H1 (cell line): ENCODE measurements at regions of chr5 and their contacts with region 1.

Region 1: GRCh38 chr5:150801117-150801927 is 22.8 kb downstream of the SMIM3 start:
- DNase-seq: peak in 1 of 2 experiments; percentile 75
- H3K4me3 ChIP-seq: peak overlapping the region; percentile 52 to 60 (median 56)
- H3K27ac ChIP-seq: 0 out of 2 replicates have a peak overlapping the region, but pooled peaks have one; percentile 5
- H3K4me1 ChIP-seq: peaks cover 0 to 3% (median 0%) of the 10 kb centered on the region in 4 experiments; a peak in 1 of 7 replicates
- H3K27me3 ChIP-seq: no peaks in the 10 kb centered on the region
- CTCF ChIP-seq: peak in 2 of 3 experiments; percentile 57 to 72; a peak in 3 of 4 replicates
- EP300 ChIP-seq: no peak
- POLR2A ChIP-seq: no peak
- RAD21 ChIP-seq: peak; percentile 62 to 70

Region 2: GRCh38 chr5:150778517-150779396 is 22.6 kb before region 1 on chr5 and contains the start of gene SMIM3:
- CTCF ChIA-PET with region 1: interaction called, 40 read pairs
- POLR2A ChIA-PET with region 1: interaction called, 4 read pairs
- DNase-seq: peak in 1 of 2 experiments; percentile 86
- H3K4me3 ChIP-seq: peak within 1 kb of the TSS; percentile 51 to 80 (median 74)
- H3K27ac ChIP-seq: 0 out of 2 replicates have a peak within 1 kb of the TSS, but pooled peaks have one; percentile 8
- H3K4me1 ChIP-seq: peaks cover 6 to 14% (median 10%) of the 10 kb centered on the region in 4 experiments; a peak in 5 of 7 replicates
- H3K27me3 ChIP-seq: peaks cover 0 to 8% (median 0%) of the 10 kb centered on the region in 4 experiments; a peak in 3 of 7 replicates
- CTCF ChIP-seq: peak; percentile 53 to 67 (median 60)
- EP300 ChIP-seq: no peak
- POLR2A ChIP-seq: peak; percentile 34 to 82
- RAD21 ChIP-seq: peak; percentile 64 to 74
- total RNA-seq, gene SMIM3: 10.4 and 13.2 TPM in 2 replicates

Region 3: GRCh38 chr5:150816946-150817345 is 15.6 kb after region 1 on chr5:
- CTCF ChIA-PET with region 1: interaction called, 27 read pairs
- POLR2A ChIA-PET with region 1: interaction called, 3 read pairs
- DNase-seq: no peak
- H3K4me3 ChIP-seq: no peak overlapping the region
- H3K27ac ChIP-seq: no peak overlapping the region
- H3K4me1 ChIP-seq: 0 out of 7 replicates have a peak, but pooled peaks cover 0 to 3% (median 0%) of the 10 kb centered on the region in 4 experiments
- H3K27me3 ChIP-seq: no peaks in the 10 kb centered on the region
- CTCF ChIP-seq: peak in 1 of 3 experiments; percentile 14; a peak in 1 of 4 replicates
- EP300 ChIP-seq: no peak
- POLR2A ChIP-seq: no peak
- RAD21 ChIP-seq: no peak

Region 4: GRCh38 chr5:150836703-150837102 is 35.4 kb after region 1 on chr5:
- CTCF ChIA-PET with region 1: interaction called, 24 read pairs
- POLR2A ChIA-PET with region 1: no interaction called
- DNase-seq: peak in 1 of 2 experiments; percentile 49
- H3K4me3 ChIP-seq: peak overlapping the region in 1 of 4 experiments; percentile 18; a peak in 1 of 8 replicates
- H3K27ac ChIP-seq: 0 out of 2 replicates have a peak overlapping the region, but pooled peaks have one; percentile 0
- H3K4me1 ChIP-seq: peaks cover 0 to 10% (median 3%) of the 10 kb centered on the region in 4 experiments; a peak in 2 of 7 replicates
- H3K27me3 ChIP-seq: no peaks in the 10 kb centered on the region
- CTCF ChIP-seq: peak in 2 of 3 experiments; percentile 2 to 28; a peak in 3 of 4 replicates
- EP300 ChIP-seq: peak in 1 of 2 experiments; percentile 98; a peak in 2 of 3 replicates
- POLR2A ChIP-seq: no peak
- RAD21 ChIP-seq: peak in 1 of 2 experiments; percentile 17; a peak in 2 of 4 replicates

Region 5: GRCh38 chr5:150989695-150990094 is 188.4 kb after region 1 on chr5:
- CTCF ChIA-PET with region 1: interaction called, 13 read pairs
- POLR2A ChIA-PET with region 1: no interaction called
- DNase-seq: peak; percentile 9 to 60
- H3K4me3 ChIP-seq: no peak overlapping the region
- H3K27ac ChIP-seq: no peak overlapping the region
- H3K4me1 ChIP-seq: no peaks in the 10 kb centered on the region
- H3K27me3 ChIP-seq: no peaks in the 10 kb centered on the region
- CTCF ChIP-seq: peak; percentile 40 to 79 (median 69)
- EP300 ChIP-seq: no peak
- POLR2A ChIP-seq: no peak
- RAD21 ChIP-seq: peak; percentile 75 to 78